ENCODE measurements at regions of chr15 and their contacts with region 1.

Region 1: DNA sequence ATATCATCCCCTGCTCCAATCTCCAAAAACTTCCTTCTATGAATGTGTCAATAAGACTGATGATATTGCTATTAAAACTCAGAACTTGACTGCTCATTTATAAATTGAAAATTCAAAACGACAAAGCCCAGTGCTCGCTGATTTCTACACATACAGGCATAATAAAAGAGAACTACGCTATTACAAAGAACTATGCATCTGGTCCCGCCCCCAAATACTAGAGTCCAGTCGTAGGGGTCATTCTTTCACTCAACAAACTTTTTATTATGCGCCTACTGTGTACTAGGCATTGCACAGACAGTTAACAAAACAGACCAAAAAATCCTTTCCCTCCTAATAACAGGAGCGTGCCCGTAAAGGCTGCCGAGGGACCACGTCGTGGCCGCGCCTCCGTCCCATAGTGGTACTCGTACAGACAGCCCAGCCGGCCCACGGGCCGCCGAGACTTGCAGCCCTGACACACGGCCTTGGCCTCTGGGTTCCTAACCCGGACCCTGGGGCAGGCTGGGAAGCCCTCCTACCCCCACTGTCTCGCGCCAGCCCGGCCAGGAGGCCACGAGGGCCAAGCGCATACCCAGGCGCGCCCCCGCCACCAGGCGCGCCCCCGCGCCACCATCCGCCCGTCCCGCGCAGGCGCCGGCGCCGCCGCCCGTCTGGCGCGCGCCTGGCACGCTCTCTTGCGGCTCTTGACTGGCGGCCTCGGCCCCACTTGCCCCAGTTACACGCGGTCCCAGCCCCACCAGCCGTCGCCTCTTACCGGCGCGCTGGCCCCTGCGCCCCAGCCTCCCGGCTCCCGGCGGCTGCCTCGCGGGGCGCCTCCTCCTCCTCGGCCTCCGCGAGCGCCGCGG is 757 bp downstream of the AVEN start:
- DNase-seq: peak; percentile 84
- ATAC-seq: peak; percentile 97

Region 2: GRCh38 chr15:33994005-33994615 is 44.1 kb before region 1 on chr15:
- intact Hi-C with region 1: no loop called
- DNase-seq: no peak
- ATAC-seq: no peak

Region 3: DNA sequence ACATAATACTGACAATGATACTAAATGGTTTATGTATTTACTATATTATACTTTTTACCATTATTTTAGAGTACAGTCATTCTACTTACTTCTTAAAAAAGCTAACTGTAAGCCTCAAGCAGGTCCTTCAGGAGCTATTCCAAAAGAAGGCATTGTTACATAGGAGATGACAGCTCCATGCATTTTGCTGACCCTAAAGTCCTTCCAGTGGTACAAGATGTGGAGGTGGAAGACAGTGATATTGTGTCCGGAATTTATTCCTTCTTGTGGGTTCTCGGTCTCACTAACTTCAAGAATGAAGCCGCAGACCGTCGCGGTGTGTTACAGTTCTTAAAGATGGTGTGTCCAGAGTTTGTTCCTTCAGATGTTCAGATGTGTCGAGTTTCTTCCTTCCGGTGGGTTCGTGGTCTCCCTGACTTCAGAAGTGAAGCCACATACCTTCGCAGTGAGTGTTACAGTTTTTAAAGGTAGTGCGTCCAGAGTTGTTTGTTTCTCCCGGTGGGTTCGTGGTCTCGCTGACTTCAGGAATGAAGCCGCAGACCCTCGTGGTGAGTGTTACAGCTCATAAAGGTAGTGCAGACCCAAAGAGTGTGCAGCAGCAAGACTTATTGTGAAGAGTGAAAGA is 20.1 kb before region 1 on chr15:
- intact Hi-C with region 1: loop called (anchors 2 kb)
- DNase-seq: no peak
- ATAC-seq: no peak

Region 4: GRCh38 chr15:34055853-34056595 is 17.8 kb after region 1 on chr15:
- intact Hi-C with region 1: no loop called
- DNase-seq: no peak
- ATAC-seq: no peak

Region 5: DNA sequence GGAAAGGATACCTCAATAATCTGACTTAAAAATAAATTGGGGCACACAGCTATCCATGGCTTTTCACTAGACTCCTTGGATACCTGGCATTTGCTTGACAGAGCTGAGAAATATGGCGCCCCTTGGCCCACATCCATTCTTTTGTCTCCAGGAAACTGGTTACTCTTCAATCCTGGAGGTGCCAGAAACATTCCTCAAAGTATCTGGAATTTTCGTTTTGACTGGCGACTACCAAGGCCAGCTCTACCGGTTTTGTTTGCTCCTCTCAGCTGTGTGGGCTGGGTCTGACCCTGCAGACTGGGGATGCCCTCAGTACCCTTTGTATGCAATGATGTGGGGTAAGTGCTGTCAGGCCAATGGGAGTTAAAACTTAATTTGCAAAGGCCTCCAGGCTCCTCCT is 144.7 kb after region 1 on chr15:
- intact Hi-C with region 1: no loop called
- DNase-seq: no peak
- ATAC-seq: no peak

Measured in sciatic nerve (tissue), 2 donors.